ENCODE measurements at regions of chr15 and their contacts with region 1.

Region 1: DNA sequence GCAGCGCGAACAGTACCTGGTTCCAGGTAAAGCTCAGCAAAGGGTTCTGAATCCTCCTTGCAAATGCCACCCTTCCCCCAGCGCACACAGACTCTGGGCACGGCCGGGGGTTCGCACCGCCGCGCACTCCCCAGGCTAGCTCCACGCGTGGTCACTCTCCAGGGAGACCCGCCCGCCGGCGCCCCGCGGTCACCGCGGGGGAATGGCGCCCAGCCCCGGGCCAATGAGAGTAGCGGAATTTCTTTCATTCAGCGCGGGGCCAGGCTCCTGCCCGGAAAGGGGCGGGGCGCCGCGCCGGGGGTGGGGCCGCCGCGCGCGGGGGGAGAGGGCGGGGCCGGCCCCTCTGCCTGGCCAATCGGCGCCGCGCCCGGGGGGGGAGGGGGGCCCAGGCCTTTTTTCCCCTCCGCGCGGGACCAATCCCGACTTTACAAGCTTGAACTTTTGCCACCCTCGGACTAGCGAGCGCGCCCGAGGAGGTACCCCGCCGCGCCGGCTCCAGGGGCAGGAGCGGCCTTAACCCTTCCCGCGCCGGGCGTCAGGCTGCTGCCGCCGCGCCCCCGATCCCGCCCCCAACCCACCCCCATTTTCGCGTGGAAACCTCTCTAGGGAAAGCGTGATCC is 1.1 kb upstream of the SMAD6 start:
- DNase-seq: peak; percentile 97
- ATAC-seq: peak; percentile 85

Region 2: DNA sequence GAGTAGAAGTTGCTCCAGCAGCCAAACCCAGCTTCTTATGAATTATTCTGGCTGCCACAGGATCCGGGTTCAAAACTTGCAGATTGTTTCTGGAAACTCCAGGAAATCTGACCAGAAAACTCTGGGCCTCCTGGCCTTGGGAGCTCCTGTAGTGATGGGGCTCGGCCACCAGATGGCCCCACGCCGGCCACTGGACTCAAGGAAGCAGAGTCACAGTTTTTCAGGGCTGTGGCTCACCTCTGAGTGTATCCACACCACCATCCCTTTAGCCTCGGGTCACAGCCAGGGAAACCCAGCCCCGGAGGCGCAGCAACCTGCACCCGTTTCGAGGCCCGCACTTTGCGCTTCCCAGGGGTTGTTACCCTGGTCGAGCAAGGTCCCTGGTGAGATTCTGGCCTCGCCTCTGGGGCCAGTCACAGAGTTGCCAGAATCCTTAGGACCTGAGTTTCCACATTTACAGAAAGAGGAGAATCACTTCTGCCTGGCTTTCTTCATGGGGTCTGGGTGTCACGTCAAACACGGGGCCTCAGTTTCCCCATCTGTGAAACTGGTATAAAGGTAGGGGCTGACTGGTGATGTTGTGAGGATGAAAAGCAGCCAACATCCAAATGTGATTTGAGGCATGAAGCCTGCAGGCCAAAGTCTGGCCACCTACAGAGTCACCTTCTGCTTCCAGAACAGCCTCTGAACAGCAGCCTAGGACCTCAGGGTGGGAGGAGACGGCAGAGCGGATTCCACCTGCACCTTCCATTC is 81.6 kb before region 1 on chr15:
- intact Hi-C with region 1: loop called (anchors 1 kb)
- DNase-seq: peak; percentile 87
- ATAC-seq: peak; percentile 72

Region 3: DNA sequence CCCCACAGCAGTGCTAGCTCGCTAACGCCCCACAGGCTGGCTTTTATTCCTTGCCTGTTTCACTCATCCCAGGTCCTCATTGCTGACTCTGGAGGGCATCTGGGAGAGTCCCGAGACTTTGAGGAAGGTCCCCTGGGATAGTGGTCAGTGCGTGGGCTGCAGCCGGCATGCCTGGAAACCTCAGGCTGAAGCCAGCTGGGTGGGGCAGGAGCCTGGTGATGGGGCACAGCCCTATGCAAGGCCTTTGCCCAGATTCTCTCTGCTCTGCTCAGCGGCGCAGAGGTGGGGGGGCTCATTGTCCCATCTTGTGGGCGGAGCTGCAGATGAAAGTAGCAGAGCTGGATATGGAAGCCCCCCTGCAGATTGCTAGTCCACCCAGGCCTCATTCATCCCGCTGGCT is 54.6 kb before region 1 on chr15:
- intact Hi-C with region 1: no loop called
- DNase-seq: no peak
- ATAC-seq: no peak

Region 4: DNA sequence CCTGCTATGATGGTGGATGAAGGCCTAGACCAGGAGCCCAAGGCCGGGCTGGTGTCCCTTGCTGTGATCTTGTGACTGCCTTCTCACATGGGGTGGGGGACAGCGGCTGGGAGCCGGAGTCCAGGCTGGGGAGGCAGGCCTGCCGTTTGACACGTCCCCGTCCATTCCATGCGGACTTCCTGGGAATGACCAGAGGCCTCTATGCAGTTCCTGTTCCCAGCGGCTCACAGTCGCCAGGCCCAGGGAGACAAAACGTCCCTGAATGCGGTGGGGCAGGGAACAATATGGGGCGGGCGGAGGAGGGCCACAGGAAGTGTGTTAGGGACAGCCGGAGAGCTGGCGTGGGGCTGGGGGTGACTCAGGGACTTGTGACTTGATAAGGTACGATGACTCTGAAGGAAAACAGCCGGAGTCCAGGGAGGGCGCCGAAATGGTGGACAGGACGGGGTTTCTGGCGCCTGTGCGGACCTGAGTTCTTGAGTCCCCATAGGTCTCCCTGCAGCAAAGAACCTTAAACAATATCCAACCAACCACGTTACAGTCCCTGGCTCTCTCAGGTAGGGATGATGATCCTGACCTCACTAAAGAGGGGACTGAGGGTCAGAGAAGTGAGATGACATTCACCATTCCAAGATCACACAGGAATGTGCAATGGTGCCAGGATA is 39.3 kb before region 1 on chr15:
- intact Hi-C with region 1: loop called (anchors 2 kb)
- DNase-seq: peak; percentile 80
- ATAC-seq: peak; percentile 56

Region 5: GRCh38 chr15:66763186-66764066 is 62.5 kb after region 1 on chr15:
- intact Hi-C with region 1: loop called (anchors 1 kb)
- DNase-seq: peak; percentile 94
- ATAC-seq: peak; percentile 90

Region 6: DNA sequence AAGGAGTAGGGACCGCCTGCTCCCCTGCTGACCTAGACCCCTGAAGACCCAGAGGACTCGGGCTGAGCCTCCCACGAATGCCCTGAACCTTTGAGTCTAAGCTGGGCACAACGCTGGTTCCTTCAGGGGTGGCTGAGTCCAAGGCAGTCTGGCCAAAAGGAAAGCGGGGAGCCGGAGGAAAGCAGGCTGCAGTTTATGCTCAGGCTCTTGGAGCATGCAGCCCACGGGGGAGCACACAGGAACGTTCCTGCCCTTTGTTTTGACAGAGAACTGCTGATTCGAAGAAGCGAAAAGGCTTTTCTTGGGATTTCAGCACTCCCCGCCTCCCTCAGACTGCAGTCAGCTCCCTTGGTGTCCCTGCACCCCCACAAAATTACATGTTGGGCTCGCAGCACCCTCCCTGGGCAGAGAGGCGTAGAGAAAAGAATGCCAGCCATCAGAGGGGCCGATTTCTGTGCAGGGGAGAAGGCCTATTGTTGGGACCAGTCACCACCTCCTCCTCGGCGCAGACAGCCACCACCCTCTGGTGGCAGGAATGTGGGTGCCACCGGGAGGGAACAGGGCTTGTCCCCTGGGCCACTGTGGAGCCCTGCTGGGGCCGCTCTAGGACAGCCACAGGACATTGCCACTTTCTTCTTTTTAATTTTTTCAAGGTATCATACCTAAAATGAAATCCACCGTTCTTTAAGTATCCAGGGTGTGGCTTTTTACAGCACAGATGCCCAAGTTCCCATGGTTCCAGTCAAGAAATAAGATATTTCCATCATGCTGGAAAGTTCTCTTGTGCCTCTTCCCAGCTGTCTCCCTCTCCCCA is 73.3 kb after region 1 on chr15:
- intact Hi-C with region 1: loop called (anchors 2 kb)
- DNase-seq: peak; percentile 89
- ATAC-seq: peak; percentile 94

Region 7: DNA sequence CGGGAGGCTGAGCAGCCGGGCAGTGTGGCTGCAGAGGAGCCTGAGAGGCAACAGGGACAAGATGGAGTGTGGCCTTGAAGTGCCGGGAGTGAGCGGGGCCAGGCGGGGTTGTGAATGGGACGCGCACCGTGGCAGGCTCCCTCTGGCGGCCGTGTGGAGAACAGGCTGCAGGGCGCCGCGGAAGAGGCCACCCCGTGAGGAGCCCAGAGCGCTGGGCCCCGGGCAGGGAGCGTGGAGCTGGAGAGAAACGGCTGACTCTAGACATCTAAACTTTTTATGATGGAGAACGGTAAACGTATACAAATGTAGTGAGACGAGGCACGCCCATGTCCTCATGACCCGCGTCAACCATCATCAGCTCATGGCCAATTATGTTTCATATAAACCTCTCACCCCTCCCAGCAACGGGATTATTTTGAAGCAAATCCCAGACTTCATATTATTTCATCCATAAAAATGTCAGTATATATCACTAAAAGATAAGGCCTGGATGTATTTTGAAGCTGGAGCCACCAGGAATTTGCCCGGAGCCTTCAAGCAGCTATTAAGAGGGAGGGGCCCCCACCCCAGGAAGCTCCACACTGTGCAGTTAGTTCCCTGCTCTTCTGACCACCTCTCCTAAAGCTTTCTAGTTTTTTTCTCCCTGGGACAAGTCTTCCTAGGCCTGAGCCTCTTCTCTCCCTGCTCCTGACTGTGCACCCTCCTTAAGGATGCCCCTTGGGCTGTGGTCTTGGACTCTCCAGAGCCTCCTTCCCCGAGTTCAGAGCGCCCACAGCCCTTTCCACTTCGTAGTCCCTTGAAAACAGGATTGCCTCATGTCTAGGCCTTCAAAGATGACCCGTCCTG is 150.5 kb after region 1 on chr15:
- intact Hi-C with region 1: loop called (anchors 2 kb)
- DNase-seq: peak; percentile 93
- ATAC-seq: peak; percentile 89